ENCODE measurements at regions of chr11 and their contacts with region 1.

Region 1: GRCh38 chr11:2930704-2931428 is 1.6 kb upstream of the PHLDA2 start:
- DNase-seq: peak; percentile 68
- H3K4me3 ChIP-seq: peak overlapping the region in 2 of 3 experiments; percentile 21 to 37
- H3K27ac ChIP-seq: peak overlapping the region; percentile 78
- H3K4me1 ChIP-seq: peaks cover 26% of the 10 kb centered on the region
- H3K27me3 ChIP-seq: no peaks in the 10 kb centered on the region
- CTCF ChIP-seq: peak; percentile 39 to 82
- POLR2A ChIP-seq: no peak

Region 2: GRCh38 chr11:2400069-2400760 is 530.7 kb before region 1 on chr11 and contains the start of gene TSSC4:
- CTCF ChIA-PET with region 1: no interaction called
- POLR2A ChIA-PET with region 1: no interaction called
- dilution Hi-C with region 1: no loop called
- intact Hi-C with region 1: loop called (anchors 1 kb)
- DNase-seq: peak; percentile 100
- H3K4me3 ChIP-seq: peak within 1 kb of the TSS; percentile 56 to 86 (median 81)
- H3K27ac ChIP-seq: peak within 1 kb of the TSS; percentile 99
- H3K4me1 ChIP-seq: peaks cover 18% of the 10 kb centered on the region
- H3K27me3 ChIP-seq: no peaks in the 10 kb centered on the region
- CTCF ChIP-seq: peak; percentile 99
- POLR2A ChIP-seq: peak; percentile 96
- total RNA-seq, gene TSSC4: 59.6 and 61.9 TPM in 2 replicates

Region 3: DNA sequence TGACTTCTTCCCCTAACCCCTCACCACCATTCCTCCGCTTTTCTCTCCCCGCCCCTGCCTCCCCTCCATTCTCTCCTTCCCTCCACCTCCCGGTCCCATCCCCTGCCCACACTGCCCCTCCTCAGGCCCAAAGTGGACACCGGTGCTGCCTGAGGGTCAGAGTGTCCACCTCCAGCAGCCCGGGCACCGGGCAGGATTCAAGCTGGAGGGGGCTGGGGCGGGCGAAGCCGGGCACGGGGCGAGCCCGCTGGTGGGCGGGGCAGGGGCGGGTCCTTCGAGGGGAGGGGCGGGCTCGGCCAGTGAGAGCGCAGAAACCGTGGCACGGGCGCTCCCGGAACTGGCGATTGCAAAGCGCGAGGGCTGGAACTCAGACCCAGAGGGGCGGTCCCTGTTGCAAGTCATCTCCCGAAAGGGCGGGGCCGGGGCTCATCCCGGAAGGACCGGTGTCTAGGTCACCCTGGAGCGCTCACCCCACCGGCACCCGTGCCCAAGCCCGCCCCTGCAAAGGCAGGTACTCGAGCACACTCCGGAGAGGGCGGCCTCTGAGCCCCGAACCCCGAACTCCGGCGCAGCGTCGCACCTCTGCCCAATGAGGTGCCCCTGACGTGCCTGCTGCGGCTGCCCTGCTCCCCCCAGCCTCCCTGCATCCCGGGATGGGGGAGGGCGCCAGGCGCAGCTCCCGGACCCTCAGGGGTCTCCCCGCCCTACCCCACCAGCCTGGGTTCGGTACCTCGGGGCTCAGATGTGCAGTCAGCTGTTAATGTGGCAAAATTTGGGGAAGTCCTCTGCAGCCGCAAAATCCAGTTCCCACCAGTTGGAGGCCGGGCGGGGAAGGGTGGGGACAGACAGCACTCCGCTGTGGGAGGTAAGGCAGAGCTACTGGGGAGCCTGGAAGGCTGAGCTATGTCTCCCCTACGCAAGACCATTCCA is 28.7 kb before region 1 on chr11:
- CTCF ChIA-PET with region 1: interaction called, 7 read pairs
- POLR2A ChIA-PET with region 1: interaction called, 11 read pairs
- dilution Hi-C with region 1: no loop called
- intact Hi-C with region 1: loop called (anchors 1 kb)
- DNase-seq: peak; percentile 72
- H3K4me3 ChIP-seq: peak overlapping the region; percentile 18 to 46 (median 37)
- H3K27ac ChIP-seq: no peak overlapping the region
- H3K4me1 ChIP-seq: peaks cover 26% of the 10 kb centered on the region
- H3K27me3 ChIP-seq: peaks cover 0 to 2% of the 10 kb centered on the region in 2 experiments
- CTCF ChIP-seq: no peak
- POLR2A ChIP-seq: peak; percentile 21

Region 4: GRCh38 chr11:2992234-2992996 is 61.5 kb after region 1 on chr11 and contains the start of gene NAP1L4:
- CTCF ChIA-PET with region 1: interaction called, 9 read pairs
- POLR2A ChIA-PET with region 1: interaction called, 4 read pairs
- dilution Hi-C with region 1: no loop called
- intact Hi-C with region 1: loop called (anchors 1 kb)
- DNase-seq: peak; percentile 97
- H3K4me3 ChIP-seq: peak within 1 kb of the TSS; percentile 64 to 97 (median 95)
- H3K27ac ChIP-seq: peak within 1 kb of the TSS; percentile 64
- H3K4me1 ChIP-seq: peaks cover 33% of the 10 kb centered on the region
- H3K27me3 ChIP-seq: no peaks in the 10 kb centered on the region
- CTCF ChIP-seq: no peak
- POLR2A ChIP-seq: peak; percentile 88
- total RNA-seq, gene NAP1L4: 173 and 177 TPM in 2 replicates

Region 5: DNA sequence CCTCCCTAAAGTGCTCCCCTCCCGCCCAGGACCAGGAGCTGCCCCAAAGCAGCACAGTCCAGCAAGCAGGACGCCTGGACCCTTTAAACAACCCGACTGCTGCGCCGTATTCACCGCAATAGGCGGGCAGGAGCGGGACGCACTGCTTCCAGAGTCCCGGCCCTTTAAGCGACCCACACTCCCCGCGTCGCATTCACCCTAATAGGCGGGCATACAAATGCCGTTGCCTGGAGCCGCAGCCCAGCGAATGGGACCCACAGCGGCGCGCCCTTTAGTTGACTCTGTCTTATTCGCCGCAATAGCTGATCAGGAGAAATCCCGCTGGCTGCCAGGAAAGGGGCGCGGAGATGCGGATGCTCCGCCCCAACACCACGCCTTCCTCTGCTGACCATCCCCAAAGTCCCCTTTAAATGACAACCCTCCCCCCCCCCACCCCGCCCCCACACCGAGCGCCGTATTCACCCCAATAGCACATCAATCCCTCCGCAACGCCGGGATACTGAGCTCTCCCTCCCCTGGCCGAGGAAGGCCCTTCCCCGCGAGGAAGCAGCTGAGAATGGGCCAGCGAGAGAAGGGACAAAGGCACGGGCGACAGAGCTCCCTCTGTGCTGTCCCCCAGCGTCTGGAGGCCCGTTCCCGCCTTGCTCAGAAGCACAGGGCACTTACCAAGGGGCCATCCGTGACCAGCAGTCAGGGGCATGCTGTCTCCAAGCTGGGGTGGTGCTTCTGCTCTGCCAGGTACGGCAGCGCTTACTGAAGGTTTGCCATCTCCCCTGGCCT is 229.6 kb after region 1 on chr11:
- CTCF ChIA-PET with region 1: no interaction called
- POLR2A ChIA-PET with region 1: no interaction called
- dilution Hi-C with region 1: no loop called
- intact Hi-C with region 1: loop called (anchors 10 kb)
- DNase-seq: peak; percentile 92
- H3K4me3 ChIP-seq: peak overlapping the region; percentile 9 to 54 (median 29)
- H3K27ac ChIP-seq: no peak overlapping the region
- H3K4me1 ChIP-seq: peaks cover 5% of the 10 kb centered on the region
- H3K27me3 ChIP-seq: no peaks in the 10 kb centered on the region
- CTCF ChIP-seq: no peak
- POLR2A ChIP-seq: no peak

Region 6: GRCh38 chr11:3642071-3642951 is 711.4 kb after region 1 on chr11:
- CTCF ChIA-PET with region 1: no interaction called
- POLR2A ChIA-PET with region 1: no interaction called
- dilution Hi-C with region 1: no loop called
- intact Hi-C with region 1: loop called (anchors 10 kb)
- DNase-seq: peak; percentile 87
- H3K4me3 ChIP-seq: peak overlapping the region; percentile 26 to 54 (median 28)
- H3K27ac ChIP-seq: no peak overlapping the region
- H3K4me1 ChIP-seq: peaks cover 5% of the 10 kb centered on the region
- H3K27me3 ChIP-seq: peaks cover 4% of the 10 kb centered on the region in 2 experiments
- CTCF ChIP-seq: no peak
- POLR2A ChIP-seq: no peak

Measured in endothelial cell of umbilical vein (primary cell).